Esophagus muscularis mucosa (tissue), 4 donors: ENCODE measurements at regions of chr1 and their contacts with region 1.

Region 1: DNA sequence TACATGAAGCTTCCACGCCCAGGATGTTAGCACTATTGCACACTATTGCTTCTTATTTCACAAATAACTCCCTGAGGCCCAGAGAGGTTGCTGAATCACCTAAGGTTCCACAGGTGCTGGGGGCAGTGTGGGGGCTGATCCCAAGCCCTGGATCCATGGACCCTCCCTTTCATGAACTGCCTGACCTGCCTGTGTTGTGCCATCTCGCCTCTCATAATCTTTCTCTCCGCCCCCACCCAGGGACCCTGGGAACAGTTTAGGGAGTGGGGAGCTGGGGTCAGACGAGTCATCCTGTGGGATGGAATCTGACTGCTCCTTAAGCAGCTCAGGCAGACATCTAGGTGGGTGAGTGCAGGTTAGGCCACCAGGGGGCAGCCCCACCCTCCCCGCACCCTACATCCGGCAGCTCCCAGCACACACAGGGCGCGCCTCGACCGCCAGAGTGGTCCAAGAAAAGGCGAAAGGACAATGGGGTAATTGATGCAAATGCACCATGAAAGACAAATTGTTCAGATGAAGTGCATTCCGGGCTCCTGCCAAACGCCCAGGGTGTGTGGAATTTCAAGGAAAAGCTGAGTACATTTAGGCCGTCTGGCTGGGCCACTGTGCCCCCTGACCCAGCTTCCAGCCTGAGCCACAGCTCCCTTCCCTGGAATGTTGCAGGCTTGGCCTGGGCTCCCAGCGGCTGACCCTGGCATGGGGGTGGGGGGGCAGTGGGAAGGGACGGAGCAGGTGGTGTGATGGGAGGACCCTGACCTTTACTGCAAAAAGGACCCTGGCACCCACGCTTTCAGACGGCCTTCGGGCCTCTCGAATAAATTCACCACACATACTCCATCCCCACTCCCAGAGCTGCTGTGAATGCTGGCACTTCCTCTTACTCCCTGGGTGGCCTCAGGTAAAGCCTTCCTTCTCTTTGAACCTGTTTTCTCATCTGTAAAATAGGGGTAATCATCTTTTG is 20.8 kb downstream of the PHLDA3 start:
- DNase-seq: no peak
- H3K4me3 ChIP-seq: no peak overlapping the region
- H3K27ac ChIP-seq: peak overlapping the region; percentile 41 to 68 (median 53)
- H3K4me1 ChIP-seq: peaks cover 32 to 41% (median 39%) of the 10 kb centered on the region in 4 donors
- H3K27me3 ChIP-seq: no peaks in the 10 kb centered on the region
- CTCF ChIP-seq: peak; percentile 87 to 91 (median 88)
- EP300 ChIP-seq: no peak
- POLR2A ChIP-seq: no peak

Region 2: DNA sequence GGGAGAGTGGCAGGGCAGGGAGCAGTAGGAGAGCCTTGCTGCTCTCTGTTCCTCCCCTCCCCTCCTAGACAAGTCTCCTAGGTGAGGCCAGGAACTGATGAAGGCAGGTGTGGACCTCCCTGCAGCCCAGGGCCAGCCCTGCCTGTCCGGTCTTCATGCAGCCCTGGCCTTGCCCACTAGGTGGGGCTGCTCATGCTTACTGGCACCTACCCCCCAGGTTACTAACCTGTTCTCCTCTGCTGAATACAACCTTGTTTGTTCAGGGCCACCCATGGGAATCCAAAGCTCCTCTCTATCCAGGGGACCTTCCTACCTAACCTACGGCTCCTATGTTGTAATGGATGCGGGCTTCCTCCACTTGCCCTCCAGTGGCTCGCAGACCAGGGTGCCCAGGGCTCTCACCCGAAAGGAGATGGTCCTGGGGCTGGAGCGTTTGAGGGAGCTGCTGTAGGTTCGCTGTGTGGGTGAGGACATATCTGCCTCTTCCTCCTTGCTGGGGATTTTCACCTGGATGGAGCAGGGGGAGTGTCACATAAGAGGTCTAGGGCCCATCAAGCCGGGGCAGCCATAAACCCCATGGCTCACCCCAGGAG is 62.8 kb before region 1 on chr1:
- intact Hi-C with region 1: no loop called
- DNase-seq: no peak
- H3K4me3 ChIP-seq: no peak overlapping the region
- H3K27ac ChIP-seq: no peak overlapping the region
- H3K4me1 ChIP-seq: peaks cover 0 to 12% (median 0%) of the 10 kb centered on the region in 4 donors
- H3K27me3 ChIP-seq: peaks cover 0 to 36% (median 0%) of the 10 kb centered on the region in 4 donors
- CTCF ChIP-seq: peak; percentile 17 to 64 (median 40)
- EP300 ChIP-seq: no peak
- POLR2A ChIP-seq: no peak

Region 3: DNA sequence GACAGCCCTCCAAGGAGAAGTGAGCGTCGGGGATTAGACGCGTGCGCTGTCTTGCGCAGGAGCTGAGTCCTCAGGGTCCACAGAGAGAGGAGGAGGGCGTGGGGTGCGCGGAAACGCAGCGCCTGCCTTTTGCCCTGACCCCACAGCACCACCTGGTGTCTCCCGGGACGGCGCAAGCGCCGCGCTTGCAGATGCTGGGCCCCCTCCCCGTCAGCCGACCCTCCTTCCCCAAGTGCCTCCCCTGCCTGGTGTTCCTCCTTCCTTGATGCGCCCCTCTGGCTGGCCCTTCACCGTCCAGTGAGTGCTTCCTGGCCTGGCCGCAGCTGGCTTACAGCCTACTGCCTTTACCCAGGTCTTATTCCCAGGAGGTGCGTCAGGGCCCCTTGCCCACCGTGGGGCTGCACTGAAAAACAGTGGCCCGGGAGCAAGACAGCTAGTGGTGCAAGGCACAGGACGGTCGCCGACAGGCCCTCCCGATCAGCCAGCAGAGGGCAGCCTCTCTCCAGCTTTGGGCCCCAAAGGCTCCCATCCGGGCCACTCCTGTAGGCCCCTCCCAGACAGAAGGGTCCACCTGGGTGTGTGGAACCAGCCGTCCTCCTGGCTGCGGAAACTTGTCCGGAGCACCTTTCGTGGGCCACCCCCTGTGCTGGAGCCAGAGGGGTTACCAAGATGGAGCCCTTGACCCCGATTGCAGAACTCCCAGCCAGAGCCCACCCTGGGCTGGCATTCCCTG is 33.7 kb after region 1 on chr1:
- intact Hi-C with region 1: loop called (anchors 1 kb)
- DNase-seq: peak; percentile 97
- H3K4me3 ChIP-seq: peak overlapping the region; percentile 36 to 55 (median 44)
- H3K27ac ChIP-seq: peak overlapping the region; percentile 93 to 99 (median 97)
- H3K4me1 ChIP-seq: peaks cover 36 to 69% (median 62%) of the 10 kb centered on the region in 4 donors
- H3K27me3 ChIP-seq: no peaks in the 10 kb centered on the region
- CTCF ChIP-seq: peak; percentile 89 to 92 (median 89)
- EP300 ChIP-seq: no peak
- POLR2A ChIP-seq: no peak

Region 4: GRCh38 chr1:201495471-201496295 is 47.5 kb after region 1 on chr1:
- intact Hi-C with region 1: no loop called
- DNase-seq: no peak
- H3K4me3 ChIP-seq: peak overlapping the region; percentile 25 to 88 (median 56)
- H3K27ac ChIP-seq: peak overlapping the region; percentile 93 to 99 (median 97)
- H3K4me1 ChIP-seq: peaks cover 99 to 100% (median 100%) of the 10 kb centered on the region in 4 donors
- H3K27me3 ChIP-seq: no peaks in the 10 kb centered on the region
- CTCF ChIP-seq: no peak
- EP300 ChIP-seq: peak; percentile 78
- POLR2A ChIP-seq: no peak

Region 5: DNA sequence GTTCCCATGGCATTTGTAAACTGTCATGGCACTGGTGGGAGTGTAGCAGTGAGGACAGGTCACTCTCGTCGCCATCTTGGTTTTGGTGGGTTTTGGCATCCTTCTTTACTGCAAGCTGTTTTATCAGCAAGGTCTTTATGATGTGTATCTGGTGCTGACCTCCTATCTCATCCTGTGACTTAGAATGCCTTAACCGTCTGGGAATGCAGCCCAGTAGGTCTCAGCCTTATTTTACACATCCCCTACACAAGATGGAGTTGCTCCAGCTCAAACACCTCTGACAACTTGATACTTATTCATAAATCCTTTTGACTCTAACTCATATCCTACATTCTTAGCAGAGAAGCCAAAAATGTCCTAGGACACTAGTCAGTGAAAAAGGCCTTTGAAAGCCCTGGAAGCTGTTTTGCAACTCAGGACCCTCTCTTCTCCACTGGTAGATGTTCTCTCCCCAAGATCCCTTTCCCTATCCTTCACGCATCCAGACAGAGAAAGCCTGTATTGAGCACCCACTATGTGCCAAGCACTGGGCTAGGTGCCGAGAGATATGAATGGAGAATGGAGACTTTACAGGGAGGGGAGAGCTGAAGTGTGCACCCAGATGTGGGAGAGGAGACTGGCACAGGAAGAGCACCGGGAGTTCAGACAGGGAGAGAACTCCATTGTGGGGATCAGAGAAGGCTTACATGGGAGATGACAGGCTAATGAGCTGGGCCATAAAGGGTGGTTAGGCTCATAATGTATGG is 65.5 kb after region 1 on chr1:
- intact Hi-C with region 1: loop called (anchors 1 kb)
- DNase-seq: no peak
- H3K4me3 ChIP-seq: no peak overlapping the region
- H3K27ac ChIP-seq: peak overlapping the region; percentile 54 to 99 (median 96)
- H3K4me1 ChIP-seq: peaks cover 24 to 42% (median 34%) of the 10 kb centered on the region in 4 donors
- H3K27me3 ChIP-seq: no peaks in the 10 kb centered on the region
- CTCF ChIP-seq: no peak
- EP300 ChIP-seq: no peak
- POLR2A ChIP-seq: no peak

Region 6: GRCh38 chr1:201709564-201710295 is 261.5 kb after region 1 on chr1:
- intact Hi-C with region 1: loop called (anchors 10 kb)
- DNase-seq: no peak
- H3K4me3 ChIP-seq: no peak overlapping the region
- H3K27ac ChIP-seq: peak overlapping the region in 3 of 4 donors; percentile 27 to 36 (median 32)
- H3K4me1 ChIP-seq: peaks cover 62 to 77% (median 71%) of the 10 kb centered on the region in 4 donors
- H3K27me3 ChIP-seq: no peaks in the 10 kb centered on the region
- CTCF ChIP-seq: peak in 2 of 3 experiments; percentile 90 to 95
- EP300 ChIP-seq: no peak
- POLR2A ChIP-seq: no peak